ENCODE measurements at regions of chr5 and their contacts with region 1.

Region 1: GRCh38 chr5:132386644-132387286 is 17.3 kb downstream of the SLC22A5 start:
- DNase-seq: peak; percentile 44 to 62
- H3K4me3 ChIP-seq: no peak overlapping the region
- H3K27ac ChIP-seq: peak overlapping the region; percentile 97
- H3K4me1 ChIP-seq: peaks cover 52% of the 10 kb centered on the region
- H3K27me3 ChIP-seq: no peaks in the 10 kb centered on the region
- CTCF ChIP-seq: peak; percentile 81

Region 2: DNA sequence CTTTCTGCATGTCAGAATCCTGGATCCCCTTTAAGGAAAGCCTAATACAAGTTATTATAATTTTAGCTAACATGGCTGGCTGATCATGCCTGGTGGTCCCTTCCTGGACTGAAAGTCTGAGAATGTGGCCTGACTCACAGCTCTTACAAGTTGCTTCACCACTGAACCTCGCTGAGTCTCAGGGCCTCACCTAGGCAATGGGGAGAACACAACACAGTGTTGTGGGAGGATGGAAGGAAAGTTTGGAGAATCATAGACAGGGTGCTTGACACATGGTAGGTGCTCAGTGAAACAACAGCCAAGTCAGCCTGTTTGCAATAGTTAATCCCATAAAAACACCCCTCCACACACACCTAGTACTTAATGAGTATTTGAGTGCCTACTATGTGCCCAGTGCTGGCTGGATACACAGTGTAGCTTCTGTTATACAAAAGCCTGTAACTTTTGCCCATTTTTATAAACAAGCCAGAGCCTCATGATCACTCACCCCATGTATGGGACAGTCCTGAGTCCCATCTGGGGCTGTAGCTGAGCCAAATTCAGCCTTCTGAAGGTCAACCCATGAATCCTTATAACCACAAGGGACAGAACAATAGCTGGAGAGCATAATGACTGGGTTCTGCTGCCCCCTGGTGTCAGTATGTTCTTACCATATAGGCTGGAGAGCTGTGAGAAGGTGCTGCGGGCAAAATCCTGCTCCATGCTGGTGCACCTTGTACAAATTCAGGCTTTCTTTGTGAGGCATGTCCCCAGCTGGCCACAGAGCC is 379.2 kb before region 1 on chr5:
- CTCF ChIA-PET with region 1: no interaction called
- POLR2A ChIA-PET with region 1: no interaction called
- intact Hi-C with region 1: no loop called
- DNase-seq: peak; percentile 54 to 64
- H3K4me3 ChIP-seq: no peak overlapping the region
- H3K27ac ChIP-seq: no peak overlapping the region
- H3K4me1 ChIP-seq: 0 out of 2 replicates have a peak, but pooled peaks cover under 1% of the 10 kb centered on the region
- H3K27me3 ChIP-seq: peaks cover 27% of the 10 kb centered on the region
- CTCF ChIP-seq: peak; percentile 79

Region 3: DNA sequence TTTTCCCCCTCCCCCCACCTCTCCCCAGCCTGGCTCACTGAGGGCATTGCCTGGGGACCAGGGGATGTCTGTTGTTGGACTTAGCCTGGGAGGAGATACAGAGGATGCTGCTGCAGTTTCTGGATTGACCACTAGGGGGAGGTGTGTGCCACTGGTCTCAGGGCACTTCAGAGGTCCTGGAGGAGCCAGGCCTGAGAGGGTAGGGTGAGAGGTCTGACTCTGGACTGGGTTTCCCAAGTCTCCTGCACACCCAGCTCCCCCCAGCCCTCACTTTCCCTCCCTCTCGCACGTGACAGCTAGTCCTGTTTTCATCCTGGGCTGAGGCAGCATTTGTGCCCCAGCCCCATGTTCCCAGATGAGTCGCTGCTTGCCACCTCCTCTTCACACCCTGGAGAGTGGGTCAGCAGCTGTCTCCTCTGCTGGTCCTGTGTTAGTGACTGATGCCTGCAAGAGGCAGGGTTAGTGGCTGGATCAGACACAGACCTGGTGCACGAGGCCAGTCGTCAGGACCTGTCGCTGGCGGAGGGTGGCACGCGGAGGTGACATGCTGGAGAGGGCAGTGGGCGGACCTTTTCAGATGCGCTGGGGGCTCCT is 321.9 kb before region 1 on chr5:
- CTCF ChIA-PET with region 1: no interaction called
- POLR2A ChIA-PET with region 1: no interaction called
- intact Hi-C with region 1: loop called (anchors 2 kb)
- DNase-seq: peak; percentile 61 to 76
- H3K4me3 ChIP-seq: no peak overlapping the region
- H3K27ac ChIP-seq: no peak overlapping the region
- H3K4me1 ChIP-seq: no peaks in the 10 kb centered on the region
- H3K27me3 ChIP-seq: no peaks in the 10 kb centered on the region
- CTCF ChIP-seq: peak; percentile 95

Region 4: GRCh38 chr5:132410451-132411381 is 24.0 kb after region 1 on chr5:
- CTCF ChIA-PET with region 1: interaction called, 5 read pairs
- POLR2A ChIA-PET with region 1: interaction called, 4 read pairs
- intact Hi-C with region 1: loop called (anchors 1 kb)
- DNase-seq: peak; percentile 64 to 80
- H3K4me3 ChIP-seq: peak overlapping the region; percentile 79
- H3K27ac ChIP-seq: peak overlapping the region; percentile 92
- H3K4me1 ChIP-seq: peaks cover 59% of the 10 kb centered on the region
- H3K27me3 ChIP-seq: no peaks in the 10 kb centered on the region
- CTCF ChIP-seq: peak; percentile 73

Region 5: GRCh38 chr5:132490486-132491367 is 104.0 kb after region 1 on chr5 and contains the start of gene IRF1:
- CTCF ChIA-PET with region 1: interaction called, 4 read pairs
- POLR2A ChIA-PET with region 1: interaction called, 10 read pairs
- intact Hi-C with region 1: loop called (anchors 1 kb)
- DNase-seq: peak; percentile 88 to 98
- H3K4me3 ChIP-seq: peak within 1 kb of the TSS; percentile 96
- H3K27ac ChIP-seq: peak within 1 kb of the TSS; percentile 72
- H3K4me1 ChIP-seq: peaks cover 38% of the 10 kb centered on the region
- H3K27me3 ChIP-seq: no peaks in the 10 kb centered on the region
- CTCF ChIP-seq: no peak
- total RNA-seq, gene IRF1: 27.1 and 38.9 TPM in 2 replicates

Region 6: GRCh38 chr5:132674671-132675506 is 288.1 kb after region 1 on chr5:
- CTCF ChIA-PET with region 1: no interaction called
- POLR2A ChIA-PET with region 1: no interaction called
- intact Hi-C with region 1: loop called (anchors 2 kb)
- DNase-seq: peak; percentile 42 to 81
- H3K4me3 ChIP-seq: no peak overlapping the region
- H3K27ac ChIP-seq: no peak overlapping the region
- H3K4me1 ChIP-seq: peaks cover 11% of the 10 kb centered on the region
- H3K27me3 ChIP-seq: no peaks in the 10 kb centered on the region
- CTCF ChIP-seq: no peak

Region 7: GRCh38 chr5:132813599-132814502 is 427.1 kb after region 1 on chr5:
- CTCF ChIA-PET with region 1: no interaction called
- POLR2A ChIA-PET with region 1: no interaction called
- intact Hi-C with region 1: loop called (anchors 2 kb)
- DNase-seq: no peak
- H3K4me3 ChIP-seq: no peak overlapping the region
- H3K27ac ChIP-seq: no peak overlapping the region
- H3K4me1 ChIP-seq: peaks cover 21% of the 10 kb centered on the region
- H3K27me3 ChIP-seq: no peaks in the 10 kb centered on the region
- CTCF ChIP-seq: no peak

Region 8: DNA sequence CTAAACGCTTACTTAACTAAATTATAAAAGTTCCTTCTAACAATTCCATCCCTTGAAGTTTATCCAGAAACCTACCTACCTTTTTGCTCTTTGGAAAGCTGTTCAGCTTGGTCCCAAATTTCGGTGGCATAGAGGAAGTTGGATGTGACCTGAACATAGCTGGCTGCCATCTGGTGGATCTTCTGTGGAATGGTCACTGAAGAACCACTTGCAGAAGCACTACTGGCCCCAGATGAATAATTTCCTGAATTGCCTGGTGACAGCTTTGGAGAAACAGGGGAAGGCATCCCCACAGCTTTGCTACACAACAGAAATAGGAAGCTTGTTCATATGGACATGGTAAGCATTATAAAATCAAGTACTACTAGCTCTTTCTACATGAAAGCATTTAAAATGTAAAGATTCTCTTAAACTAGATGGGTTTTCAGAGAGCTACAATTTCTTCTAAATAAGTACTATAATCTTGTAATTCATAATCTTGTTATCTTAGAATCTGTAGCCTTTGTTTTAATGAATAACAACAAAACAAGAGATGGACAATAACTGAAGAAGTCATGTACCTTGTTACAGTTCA is 496.6 kb after region 1 on chr5:
- CTCF ChIA-PET with region 1: no interaction called
- POLR2A ChIA-PET with region 1: interaction called, 7 read pairs
- intact Hi-C with region 1: loop called (anchors 1 kb)
- DNase-seq: peak; percentile 18 to 61
- H3K4me3 ChIP-seq: no peak overlapping the region
- H3K27ac ChIP-seq: no peak overlapping the region; the same call in 1 of the 2 replicates
- H3K4me1 ChIP-seq: no peaks in the 10 kb centered on the region
- H3K27me3 ChIP-seq: no peaks in the 10 kb centered on the region
- CTCF ChIP-seq: peak; percentile 77

Measured in PC-9 (cell line).